ENCODE measurements at regions of chr18 and their contacts with region 1.

Region 1: GRCh38 chr18:79657342-79657985 is 22.1 kb upstream of the CTDP1 start:
- DNase-seq: no peak
- CTCF ChIP-seq: no peak

Region 2: DNA sequence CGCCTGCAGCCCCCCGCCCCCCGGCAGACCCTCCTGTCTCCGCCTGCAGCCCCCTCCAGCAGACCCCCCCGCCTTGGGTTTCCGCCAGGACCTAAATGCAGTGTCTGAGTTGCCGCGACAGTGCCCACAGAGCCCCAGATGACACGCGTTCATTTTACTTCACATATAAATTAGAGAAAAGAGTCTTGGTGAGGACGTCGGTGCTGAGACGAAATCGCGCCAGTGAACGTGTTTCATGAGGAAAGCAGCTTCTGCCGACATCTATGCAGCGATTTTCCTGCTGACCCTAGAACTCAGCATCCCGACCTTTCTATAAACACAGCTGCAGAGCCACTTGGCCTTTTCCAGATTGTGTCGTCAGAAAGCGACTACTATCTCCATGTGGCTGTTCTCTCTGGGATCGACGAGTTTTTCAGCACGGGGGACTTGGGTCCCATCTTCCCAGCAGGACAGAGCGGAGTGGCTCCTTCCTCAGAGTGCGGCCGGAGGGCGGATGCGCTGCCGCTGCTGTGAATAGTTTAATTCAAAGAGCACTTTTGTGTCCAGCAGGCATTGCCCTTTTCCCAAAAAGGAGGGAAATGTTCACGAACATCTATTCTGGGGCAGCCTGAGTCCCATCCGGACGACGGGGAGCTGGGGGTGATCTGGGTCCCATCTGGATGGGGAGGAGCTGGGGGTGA is 125.0 kb before region 1 on chr18:
- in situ Hi-C with region 1: loop called (anchors 10 kb)
- DNase-seq: no peak
- CTCF ChIP-seq: no peak

Region 3: DNA sequence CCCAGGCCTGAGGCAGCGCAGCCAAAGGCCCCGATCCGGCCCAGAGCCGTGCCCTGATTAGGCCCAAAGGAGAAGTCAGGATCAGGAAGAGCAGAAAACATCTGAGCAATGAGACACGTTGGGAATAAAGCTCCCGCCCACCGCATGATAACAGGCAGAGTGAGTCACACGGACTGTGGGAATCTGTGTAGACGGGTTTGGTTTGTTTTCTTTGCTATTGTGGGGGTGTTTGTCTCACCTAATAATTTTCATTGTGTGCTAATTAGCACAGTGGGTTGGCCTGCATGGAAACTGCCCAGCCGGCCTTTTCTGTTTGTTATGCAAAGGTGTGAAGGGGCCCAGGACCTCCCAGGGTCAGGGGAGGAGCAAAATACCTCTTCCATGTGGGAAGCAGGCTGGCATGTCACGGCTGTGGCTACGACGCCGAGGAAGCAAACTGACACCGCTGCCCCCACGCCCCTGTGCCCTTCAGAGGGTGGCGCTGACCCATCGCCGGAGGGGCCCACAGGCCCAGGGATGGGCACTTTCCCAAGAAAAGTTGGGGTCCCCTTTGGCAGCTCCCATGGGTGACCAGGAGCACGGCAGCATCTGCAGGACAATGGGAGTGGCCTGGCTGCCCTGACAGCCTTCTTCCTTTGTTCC is 46.3 kb before region 1 on chr18:
- in situ Hi-C with region 1: no loop called
- DNase-seq: no peak
- CTCF ChIP-seq: no peak

Measured in GM13977 (cell line).